Right ventricle myocardium superior (tissue), 1 donor: ENCODE measurements at regions of chr11 and their contacts with region 1.

Region 1: DNA sequence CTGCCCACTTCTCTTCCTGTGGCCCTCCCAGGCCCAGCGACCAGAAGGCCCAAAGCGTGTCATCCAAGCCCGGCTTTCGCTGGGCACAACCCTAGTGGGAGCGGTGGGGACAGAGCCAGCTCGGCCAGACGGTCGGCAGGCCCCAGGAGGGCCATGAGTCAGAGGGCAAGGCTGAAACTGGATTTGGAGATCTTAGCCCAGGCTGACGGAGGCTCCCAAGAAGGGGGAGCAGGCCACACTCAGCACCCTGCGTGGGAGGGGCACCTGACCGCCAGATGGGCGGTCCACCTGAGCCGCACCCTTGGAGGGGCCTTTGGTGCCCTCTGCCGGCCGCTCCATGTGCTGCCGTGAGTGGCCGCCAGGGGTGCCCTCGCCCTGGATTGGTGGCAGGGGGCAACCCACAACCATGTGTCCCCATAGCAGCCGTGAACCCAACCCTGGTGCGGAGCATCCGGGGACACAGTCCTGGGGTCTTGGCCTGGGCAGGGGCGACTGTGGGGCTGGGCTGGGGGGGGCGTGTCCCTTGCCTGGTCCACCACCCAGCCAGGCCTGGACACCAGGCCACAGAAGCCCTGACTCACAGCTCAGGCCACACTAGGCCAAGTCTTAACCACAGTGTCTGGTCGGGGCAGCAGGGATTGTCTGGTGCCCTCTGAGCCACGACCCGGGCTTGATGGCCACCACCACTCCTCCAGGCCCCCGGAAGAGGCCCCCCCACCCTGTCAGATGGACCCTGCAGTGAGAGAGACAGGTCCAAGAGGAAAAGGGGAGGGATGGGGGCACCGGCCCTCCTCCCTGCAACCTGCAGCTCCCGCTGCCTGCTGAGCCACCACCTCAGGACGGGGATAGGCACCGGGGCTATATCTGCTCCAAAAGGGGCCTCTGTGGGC is 19.2 kb upstream of the TALDO1 start:
- DNase-seq: peak; percentile 88
- ATAC-seq: peak; percentile 92

Region 2: DNA sequence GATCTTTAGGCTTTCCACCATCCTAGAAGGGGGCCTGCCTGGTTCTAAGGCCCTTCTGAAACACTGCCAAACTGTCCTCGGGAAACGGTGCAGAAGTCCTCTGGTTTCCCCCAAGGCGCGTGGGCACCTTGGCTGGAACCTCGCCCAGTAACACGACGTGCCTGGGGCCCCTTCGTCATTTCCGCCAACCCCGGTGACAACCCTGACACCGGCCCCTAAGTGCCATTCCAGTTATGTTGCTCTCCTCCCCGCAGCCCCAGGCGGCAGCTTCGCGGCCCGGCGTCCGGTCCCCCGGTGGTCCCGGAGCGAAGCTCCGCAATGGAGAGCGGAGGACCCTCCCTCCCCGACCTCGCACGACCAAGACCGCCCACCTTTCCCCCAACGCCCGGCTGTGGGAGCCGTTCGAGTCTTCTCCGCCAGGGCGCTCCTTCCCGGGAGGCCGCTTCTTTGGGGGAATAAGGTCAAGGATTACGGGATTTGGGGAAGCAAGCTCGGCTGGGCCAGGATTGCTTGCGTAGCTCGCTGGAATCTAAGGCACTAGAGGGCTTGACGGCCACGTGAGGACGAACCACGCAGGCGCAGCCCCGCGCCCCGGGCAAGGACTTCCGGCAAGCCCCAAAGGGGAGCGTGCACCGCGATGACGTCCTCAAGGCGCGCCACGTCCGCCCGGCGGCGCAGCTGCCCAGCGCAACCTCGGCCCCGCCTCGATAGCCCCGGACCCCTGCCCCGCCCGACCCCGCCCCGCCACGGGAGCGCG is 221.7 kb before region 1 on chr11:
- intact Hi-C with region 1: no loop called
- DNase-seq: peak; percentile 98
- ATAC-seq: peak; percentile 87

Region 3: GRCh38 chr11:554824-555472 is 173.2 kb before region 1 on chr11:
- intact Hi-C with region 1: loop called (anchors 10 kb)
- DNase-seq: peak; percentile 70
- ATAC-seq: peak; percentile 76

Region 4: DNA sequence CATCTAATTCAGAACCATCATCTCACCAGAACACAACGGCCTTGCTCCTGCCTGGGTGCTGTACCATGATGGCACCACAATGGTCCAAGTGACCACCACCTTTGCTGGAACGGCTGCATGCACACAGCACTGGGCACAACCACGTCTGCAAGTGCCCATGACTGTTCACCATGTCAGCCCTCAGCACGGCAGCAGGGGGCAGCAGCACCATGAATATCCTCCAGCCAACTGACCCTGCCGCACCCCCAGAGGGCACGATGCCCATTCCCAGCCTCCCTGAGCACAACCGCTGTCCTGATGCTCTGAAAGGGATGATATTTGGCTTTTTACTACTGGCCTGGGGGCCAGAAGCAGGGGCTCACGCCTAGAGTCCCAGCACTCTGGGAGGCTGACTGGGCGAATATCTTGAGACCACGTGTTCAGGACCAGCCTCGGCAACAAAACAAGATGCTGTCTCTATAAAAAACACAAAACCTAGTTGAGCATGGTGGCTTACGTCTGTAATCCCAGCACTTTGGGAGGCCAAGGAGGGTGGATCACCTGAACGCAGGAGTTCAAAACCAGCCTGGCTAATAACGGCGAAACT is 65.3 kb before region 1 on chr11:
- intact Hi-C with region 1: loop called (anchors 10 kb)
- DNase-seq: peak; percentile 78
- ATAC-seq: peak; percentile 69